Right ventricle myocardium inferior (tissue), 1 donor: ENCODE measurements at regions of chr1 and their contacts with region 1.

Region 1: DNA sequence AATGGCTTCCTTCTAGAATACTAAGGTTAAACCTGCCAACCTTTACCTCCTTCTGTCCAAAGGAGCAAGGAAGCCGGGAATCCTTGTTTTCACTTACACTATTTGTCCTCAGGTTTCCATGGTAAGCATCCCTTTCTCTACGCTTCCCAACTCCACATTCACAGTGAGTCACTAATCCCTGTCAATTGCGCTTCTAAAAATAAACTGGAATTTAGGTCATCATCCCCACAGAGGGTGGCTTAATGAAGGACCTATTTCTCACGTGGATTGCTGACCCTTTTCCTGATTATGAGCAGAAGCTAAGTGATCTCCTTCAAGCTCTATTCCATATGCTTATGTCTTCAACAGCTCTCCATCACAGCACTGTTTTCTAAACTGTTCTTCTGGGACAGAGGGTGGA is 39.9 kb upstream of the ABCA4 start:
- DNase-seq: no peak
- ATAC-seq: peak; percentile 71

Region 2: GRCh38 chr1:94072840-94073522 is 87.8 kb before region 1 on chr1:
- intact Hi-C with region 1: loop called (anchors 5 kb)
- DNase-seq: no peak
- ATAC-seq: no peak

Region 3: DNA sequence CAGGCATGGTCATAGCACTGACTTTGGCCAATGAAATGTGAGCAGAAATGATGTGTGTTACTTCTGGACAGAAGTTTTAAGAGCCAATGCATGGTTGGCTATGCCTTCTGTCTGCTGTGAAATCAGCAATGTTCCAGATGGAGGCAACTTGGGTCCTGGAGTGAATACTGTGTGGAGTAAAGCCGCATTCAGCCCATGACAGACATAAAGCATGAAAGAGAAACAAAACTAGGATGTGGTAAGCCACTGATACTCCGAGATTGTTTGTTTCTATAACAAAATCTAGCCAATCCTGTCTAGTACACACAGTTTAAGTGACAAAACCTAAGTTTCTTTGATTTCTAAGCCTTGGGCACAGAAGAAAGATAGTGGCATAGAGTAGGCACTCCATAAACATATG is 123.7 kb after region 1 on chr1:
- intact Hi-C with region 1: no loop called
- DNase-seq: no peak
- ATAC-seq: no peak